Adrenal gland (tissue), 19 donors: ENCODE measurements at regions of chr5 and their contacts with region 1.

Region 1: GRCh38 chr5:6765612-6766525 is 52.6 kb downstream of the TENT4A start:
- DNase-seq: peak; percentile 77 to 93 (median 82)
- H3K4me3 ChIP-seq: peak overlapping the region in 1 of 4 donors; percentile 7
- H3K27ac ChIP-seq: peak overlapping the region in 1 of 5 donors; percentile 72
- H3K4me1 ChIP-seq: peaks cover 4 to 14% of the 10 kb centered on the region in 2 donors
- H3K27me3 ChIP-seq: no peaks in the 10 kb centered on the region
- CTCF ChIP-seq: peak; percentile 69 to 94 (median 84)
- POLR2A ChIP-seq: no peak

Region 2: GRCh38 chr5:7391814-7392692 is 626.2 kb after region 1 on chr5:
- intact Hi-C with region 1: loop called in 1 of 2 experiments (anchors 10 kb)
- DNase-seq: peak in 4 of 7 donors; percentile 26 to 85 (median 30)
- H3K4me3 ChIP-seq: no peak overlapping the region
- H3K27ac ChIP-seq: no peak overlapping the region
- H3K4me1 ChIP-seq: peaks cover 3 to 5% of the 10 kb centered on the region in 2 donors
- H3K27me3 ChIP-seq: peaks cover 11% of the 10 kb centered on the region
- CTCF ChIP-seq: peak; percentile 26 to 59 (median 48)
- POLR2A ChIP-seq: no peak

Region 3: DNA sequence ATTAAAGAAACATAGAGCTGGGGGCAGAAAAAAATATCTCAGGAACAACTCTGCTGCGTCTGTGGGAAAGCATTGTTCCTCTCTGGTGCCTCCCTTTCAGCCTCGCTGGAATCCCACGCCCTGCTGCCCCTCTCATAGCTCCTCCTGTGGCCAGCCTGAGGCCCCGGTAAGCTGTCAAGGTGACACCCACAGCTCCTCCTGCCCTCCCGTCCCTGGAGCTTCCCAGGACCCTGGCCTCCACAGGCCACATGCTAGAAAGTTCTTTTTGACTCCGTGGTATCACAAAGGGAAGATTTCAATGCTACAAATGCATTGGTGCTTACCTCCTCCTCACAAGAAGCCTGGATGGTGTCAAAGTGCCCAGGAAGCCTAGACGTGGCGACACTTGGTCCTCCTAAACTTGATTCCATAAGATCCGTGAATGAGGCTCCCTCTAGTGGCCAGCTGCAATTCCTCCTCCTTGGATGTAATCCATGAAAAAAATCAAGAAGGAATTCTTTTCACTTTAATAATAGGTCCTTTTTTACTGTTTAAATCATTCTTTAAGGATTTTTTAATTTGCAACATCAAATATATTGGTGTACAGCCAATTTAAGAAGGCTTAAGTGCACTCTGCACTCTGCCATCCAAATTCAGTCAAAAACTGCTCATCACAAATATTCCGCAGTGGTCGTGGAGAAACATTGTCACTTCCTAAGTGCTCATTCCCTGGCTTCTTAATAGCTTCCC is 980.2 kb after region 1 on chr5:
- intact Hi-C with region 1: loop called in 1 of 2 experiments (anchors 5 kb)
- DNase-seq: peak; percentile 60 to 91 (median 78)
- H3K4me3 ChIP-seq: no peak overlapping the region
- H3K27ac ChIP-seq: no peak overlapping the region
- H3K4me1 ChIP-seq: no peaks in the 10 kb centered on the region
- H3K27me3 ChIP-seq: no peaks in the 10 kb centered on the region
- CTCF ChIP-seq: peak; percentile 72 to 93 (median 76)
- POLR2A ChIP-seq: no peak